Upper lobe of right lung (tissue), 1 donor: ENCODE measurements at regions of chr18 and their contacts with region 1.

Region 1: GRCh38 chr18:13525381-13526029 is 200.9 kb downstream of the FAM210A start:
- DNase-seq: no peak
- ATAC-seq: no peak
- H3K4me3 ChIP-seq: no peak overlapping the region
- H3K27ac ChIP-seq: no peak overlapping the region
- H3K4me1 ChIP-seq: no peaks in the 10 kb centered on the region
- H3K27me3 ChIP-seq: no peaks in the 10 kb centered on the region
- CTCF ChIP-seq: no peak

Region 2: GRCh38 chr18:13216092-13216582 is 309.4 kb before region 1 on chr18:
- intact Hi-C with region 1: loop called (anchors 5 kb)
- DNase-seq: peak; percentile 75
- ATAC-seq: peak; percentile 84
- H3K4me3 ChIP-seq: no peak overlapping the region
- H3K27ac ChIP-seq: no peak overlapping the region
- H3K4me1 ChIP-seq: peaks cover 25% of the 10 kb centered on the region
- H3K27me3 ChIP-seq: peaks cover 4% of the 10 kb centered on the region
- CTCF ChIP-seq: peak; percentile 72